Transverse colon (tissue), 4 donors: ENCODE measurements at regions of chr19 and their contacts with region 1.

Region 1: GRCh38 chr19:11374433-11375142 is at the start of gene SWSAP1:
- DNase-seq: peak; percentile 99
- H3K4me3 ChIP-seq: peak within 1 kb of the TSS; percentile 50 to 70 (median 62)
- H3K27ac ChIP-seq: peak within 1 kb of the TSS; percentile 92 to 97 (median 94)
- H3K4me1 ChIP-seq: peaks cover 18 to 39% (median 32%) of the 10 kb centered on the region in 4 donors
- H3K27me3 ChIP-seq: no peaks in the 10 kb centered on the region
- CTCF ChIP-seq: no peak
- EP300 ChIP-seq: no peak
- POLR2A ChIP-seq: peak; percentile 70
- total RNA-seq, gene SWSAP1: 2.1 to 11.1 (median 2.6) TPM

Region 2: GRCh38 chr19:11073568-11073967 is 301.0 kb before region 1 on chr19:
- in situ Hi-C with region 1: no loop called
- intact Hi-C with region 1: no loop called
- DNase-seq: no peak
- H3K4me3 ChIP-seq: no peak overlapping the region
- H3K27ac ChIP-seq: no peak overlapping the region
- H3K4me1 ChIP-seq: peaks cover 0 to 2% (median 0%) of the 10 kb centered on the region in 4 donors
- H3K27me3 ChIP-seq: no peaks in the 10 kb centered on the region
- CTCF ChIP-seq: no peak
- EP300 ChIP-seq: no peak
- POLR2A ChIP-seq: no peak

Region 3: DNA sequence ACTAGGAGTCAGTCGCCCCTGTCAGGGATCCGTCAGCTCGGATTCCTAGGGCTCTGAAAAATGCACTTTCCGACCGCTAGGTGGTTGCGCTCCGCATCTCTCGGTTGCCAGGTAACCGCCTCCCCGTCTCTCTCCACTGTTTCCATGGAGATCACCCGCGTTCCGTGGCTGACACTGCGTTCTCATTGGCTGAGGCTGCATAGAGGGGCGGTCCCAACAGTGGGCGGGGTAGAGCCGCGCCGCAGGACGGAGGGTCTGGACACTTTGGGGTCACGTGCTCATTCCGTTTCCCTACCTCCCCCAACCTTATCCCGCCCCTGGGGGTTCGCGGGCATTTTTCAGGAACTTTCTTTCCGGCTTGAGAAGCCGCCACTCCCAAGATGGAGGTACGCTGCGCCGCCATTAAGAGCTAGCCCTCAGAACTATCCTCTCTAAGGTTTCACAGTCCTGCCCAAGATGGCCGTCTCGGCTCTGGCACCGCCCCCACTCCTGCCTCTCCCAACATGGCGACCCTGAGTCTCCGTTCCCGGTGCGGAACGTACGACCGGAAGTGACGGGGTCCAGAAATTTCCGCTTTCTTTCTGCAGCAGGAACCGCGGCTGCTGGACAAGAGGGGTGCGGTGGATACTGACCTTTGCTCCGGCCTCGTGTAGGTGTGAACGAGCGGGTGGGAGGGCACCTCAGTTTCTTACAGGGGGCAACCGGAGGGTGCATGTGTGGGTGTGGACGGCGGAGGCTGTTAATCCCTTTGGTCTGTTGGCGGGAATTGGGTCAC is 60.7 kb after region 1 on chr19 and contains the starts of genes ODAD3 and PRKCSH:
- in situ Hi-C with region 1: loop called in 1 of 4 experiments (anchors 10 kb)
- intact Hi-C with region 1: no loop called
- DNase-seq: peak; percentile 99
- H3K4me3 ChIP-seq: peak within 1 kb of the TSS; percentile 58 to 77 (median 70)
- H3K27ac ChIP-seq: peak within 1 kb of the TSS; percentile 82 to 92 (median 86)
- H3K4me1 ChIP-seq: peaks cover 9 to 18% (median 15%) of the 10 kb centered on the region in 4 donors
- H3K27me3 ChIP-seq: no peaks in the 10 kb centered on the region
- CTCF ChIP-seq: peak; percentile 86 to 100 (median 91)
- EP300 ChIP-seq: no peak
- POLR2A ChIP-seq: peak; percentile 64
- total RNA-seq, gene ODAD3: 0.32 to 2.2 TPM in 2 of 4 donors, not detected in the others
- total RNA-seq, gene PRKCSH: 119 to 195 (median 183) TPM